GM12878 (cell line): ENCODE measurements at regions of chr1 and their contacts with region 1.

Region 1: DNA sequence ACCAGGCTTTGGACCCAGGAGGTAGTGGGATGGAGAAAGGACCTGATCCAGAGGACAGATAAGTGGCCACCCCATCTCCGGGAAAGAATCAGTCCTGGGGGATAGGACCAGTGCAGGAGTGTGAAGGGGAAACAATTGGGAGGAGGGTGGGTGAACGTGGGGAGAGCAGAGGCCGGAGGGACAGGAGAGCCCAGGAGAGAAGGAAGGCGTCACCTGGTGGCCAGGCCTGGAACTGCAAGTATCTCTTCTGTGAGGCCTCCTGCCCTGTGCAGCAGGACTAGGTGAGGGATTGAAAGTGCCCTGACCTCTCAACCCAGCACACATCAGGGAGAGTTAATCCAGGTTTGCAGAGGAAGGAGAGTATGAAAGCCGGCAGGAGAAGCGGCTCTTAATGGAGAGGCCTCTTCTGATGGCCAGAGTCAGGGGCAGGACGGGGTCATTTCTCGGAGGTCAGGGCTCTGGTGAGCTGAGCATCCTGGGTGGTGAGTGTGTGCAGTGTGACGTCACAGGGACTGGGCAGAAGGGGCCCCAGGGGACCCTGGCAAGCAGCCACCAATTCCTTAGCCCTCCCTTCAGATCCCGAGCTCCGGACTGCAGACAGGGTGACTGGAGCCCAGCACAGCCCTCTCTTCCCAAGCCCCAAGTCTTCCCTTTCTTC is 9.2 kb upstream of the LAD1 start:
- DNase-seq: no peak
- ATAC-seq: peak; percentile 51
- H3K4me3 ChIP-seq: no peak overlapping the region
- H3K27ac ChIP-seq: no peak overlapping the region
- H3K4me1 ChIP-seq: peaks cover 35% of the 10 kb centered on the region
- H3K27me3 ChIP-seq: no peaks in the 10 kb centered on the region; a peak in 1 of 4 replicates
- CTCF ChIP-seq: peak; percentile 96 to 99 (median 98); a peak in 5 of 6 replicates
- EP300 ChIP-seq: no peak
- POLR2A ChIP-seq: no peak
- RAD21 ChIP-seq: peak; percentile 70

Region 2: GRCh38 chr1:201348211-201348566 is 60.1 kb before region 1 on chr1:
- CTCF ChIA-PET with region 1: interaction called, 30 read pairs
- POLR2A ChIA-PET with region 1: no interaction called
- RAD21 ChIA-PET with region 1: interaction called, 8 read pairs
- SMC1A ChIA-PET with region 1: interaction called, 4 read pairs
- in situ Hi-C with region 1: no loop called
- intact Hi-C with region 1: loop called (anchors 1 kb)
- DNase-seq: no peak
- ATAC-seq: peak; percentile 89
- H3K4me3 ChIP-seq: no peak overlapping the region
- H3K27ac ChIP-seq: no peak overlapping the region
- H3K4me1 ChIP-seq: no peaks in the 10 kb centered on the region
- H3K27me3 ChIP-seq: peaks cover 0 to 3% of the 10 kb centered on the region in 2 experiments; a peak in 2 of 4 replicates
- CTCF ChIP-seq: peak; percentile 72 to 78 (median 74)
- EP300 ChIP-seq: no peak
- POLR2A ChIP-seq: no peak
- RAD21 ChIP-seq: peak; percentile 58

Region 3: GRCh38 chr1:201419746-201420607 is 11.7 kb after region 1 on chr1:
- CTCF ChIA-PET with region 1: interaction called, 20 read pairs
- POLR2A ChIA-PET with region 1: interaction called, 3 read pairs
- RAD21 ChIA-PET with region 1: interaction called, 17 read pairs
- SMC1A ChIA-PET with region 1: interaction called, 14 read pairs
- in situ Hi-C with region 1: no loop called
- intact Hi-C with region 1: no loop called
- DNase-seq: no peak
- ATAC-seq: peak; percentile 83
- H3K4me3 ChIP-seq: no peak overlapping the region
- H3K27ac ChIP-seq: no peak overlapping the region
- H3K4me1 ChIP-seq: peaks cover 8% of the 10 kb centered on the region
- H3K27me3 ChIP-seq: no peaks in the 10 kb centered on the region; a peak in 2 of 4 replicates
- CTCF ChIP-seq: no peak
- EP300 ChIP-seq: no peak
- POLR2A ChIP-seq: no peak
- RAD21 ChIP-seq: no peak

Region 4: DNA sequence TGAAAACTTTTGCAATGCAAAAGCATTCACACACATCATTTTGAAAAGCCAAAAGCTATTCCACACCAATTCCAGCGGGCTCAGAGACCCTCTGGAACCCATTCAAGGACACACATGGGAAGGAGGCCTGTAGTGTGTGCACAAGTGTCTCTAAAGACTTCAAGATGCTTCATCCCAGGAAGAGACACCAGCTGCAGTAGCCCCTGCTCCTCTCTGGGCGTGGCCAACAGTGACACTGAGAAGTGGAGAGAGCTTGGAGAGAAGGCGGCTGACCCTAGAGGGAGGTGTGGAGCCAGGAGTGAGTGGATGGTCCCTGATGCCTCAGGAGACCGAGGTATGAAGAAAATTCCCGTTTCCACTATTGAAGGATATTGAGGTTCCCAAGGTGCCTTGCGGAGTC is 28.1 kb after region 1 on chr1:
- CTCF ChIA-PET with region 1: interaction called, 56 read pairs
- POLR2A ChIA-PET with region 1: no interaction called
- RAD21 ChIA-PET with region 1: interaction called, 6 read pairs
- SMC1A ChIA-PET with region 1: interaction called, 19 read pairs
- in situ Hi-C with region 1: no loop called
- intact Hi-C with region 1: no loop called
- DNase-seq: no peak
- ATAC-seq: peak; percentile 42; the same call in 2 of the 3 replicates
- H3K4me3 ChIP-seq: no peak overlapping the region
- H3K27ac ChIP-seq: no peak overlapping the region
- H3K4me1 ChIP-seq: peaks cover 3% of the 10 kb centered on the region; the same call in 1 of the 2 replicates
- H3K27me3 ChIP-seq: no peaks in the 10 kb centered on the region
- CTCF ChIP-seq: no peak; a peak in 1 of 6 replicates
- EP300 ChIP-seq: no peak
- POLR2A ChIP-seq: no peak
- RAD21 ChIP-seq: no peak

Region 5: DNA sequence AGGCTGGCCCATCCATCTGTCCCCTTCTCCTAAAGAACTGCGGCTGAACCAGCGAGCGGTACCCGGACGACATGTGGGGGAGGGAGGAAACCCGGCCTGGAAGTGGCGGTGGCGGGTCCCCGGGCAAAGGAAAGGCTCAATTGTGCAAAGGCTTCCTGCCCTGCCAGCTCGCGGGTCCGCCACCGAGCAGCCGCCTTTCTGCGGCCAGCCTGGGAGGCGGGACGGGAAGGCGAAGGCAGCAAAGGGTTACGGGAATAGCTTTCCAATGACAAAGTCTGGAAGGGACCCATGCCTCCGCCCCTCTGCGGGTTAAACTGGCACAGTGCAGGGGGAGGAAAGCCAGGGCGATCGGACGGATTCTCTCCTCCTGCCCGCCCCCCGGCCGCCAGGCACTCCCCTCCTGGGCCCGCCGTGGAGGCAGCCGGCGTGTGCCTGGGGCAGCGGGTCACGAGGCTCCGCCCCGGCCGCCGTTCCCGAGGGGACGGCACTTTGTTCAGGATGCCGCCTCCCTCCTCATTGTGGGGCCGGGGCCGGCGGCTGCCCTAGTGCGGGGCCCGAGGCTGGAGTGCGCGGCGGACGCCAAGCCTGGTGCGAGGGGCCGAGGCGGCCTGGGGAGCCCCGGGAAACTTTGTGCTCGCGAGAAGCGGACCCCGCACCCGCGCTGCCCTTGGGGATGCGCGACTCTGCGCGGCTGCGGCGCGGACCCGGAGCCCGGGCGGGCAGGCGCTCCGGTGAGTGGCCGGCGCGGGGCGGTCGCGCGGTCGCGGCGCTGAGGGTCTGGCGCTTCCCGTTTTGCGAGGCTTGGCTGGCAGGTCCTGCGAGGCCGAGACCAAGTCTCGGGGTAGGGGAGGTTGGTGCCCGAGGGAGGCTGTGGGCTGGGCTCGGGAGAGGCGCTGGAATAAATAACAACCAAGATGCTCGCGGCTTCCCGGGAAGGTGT is 130.6 kb after region 1 on chr1 and contains the start of gene NAV1:
- CTCF ChIA-PET with region 1: no interaction called
- POLR2A ChIA-PET with region 1: no interaction called
- RAD21 ChIA-PET with region 1: no interaction called
- SMC1A ChIA-PET with region 1: no interaction called
- in situ Hi-C with region 1: no loop called
- intact Hi-C with region 1: no loop called
- DNase-seq: no peak
- ATAC-seq: peak; percentile 36
- H3K4me3 ChIP-seq: peak within 1 kb of the TSS; percentile 39; the same call in 1 of the 2 replicates
- H3K27ac ChIP-seq: no peak within 1 kb of the TSS
- H3K4me1 ChIP-seq: no peaks in the 10 kb centered on the region
- H3K27me3 ChIP-seq: peaks cover 13 to 31% of the 10 kb centered on the region in 2 experiments
- CTCF ChIP-seq: no peak
- EP300 ChIP-seq: no peak
- POLR2A ChIP-seq: no peak
- RAD21 ChIP-seq: no peak
- polyA plus RNA-seq, gene NAV1: 0.04 to 0.05 TPM